ENCODE measurements at regions of chr5 and their contacts with region 1.

Region 1: GRCh38 chr5:149775785-149776184 is 45.7 kb downstream of the PPARGC1B start:
- DNase-seq: no peak
- CTCF ChIP-seq: peak; percentile 29

Region 2: GRCh38 chr5:149747141-149747832 is 28.5 kb before region 1 on chr5:
- CTCF ChIA-PET with region 1: interaction called, 22 read pairs
- POLR2A ChIA-PET with region 1: no interaction called
- DNase-seq: no peak
- CTCF ChIP-seq: no peak

Region 3: DNA sequence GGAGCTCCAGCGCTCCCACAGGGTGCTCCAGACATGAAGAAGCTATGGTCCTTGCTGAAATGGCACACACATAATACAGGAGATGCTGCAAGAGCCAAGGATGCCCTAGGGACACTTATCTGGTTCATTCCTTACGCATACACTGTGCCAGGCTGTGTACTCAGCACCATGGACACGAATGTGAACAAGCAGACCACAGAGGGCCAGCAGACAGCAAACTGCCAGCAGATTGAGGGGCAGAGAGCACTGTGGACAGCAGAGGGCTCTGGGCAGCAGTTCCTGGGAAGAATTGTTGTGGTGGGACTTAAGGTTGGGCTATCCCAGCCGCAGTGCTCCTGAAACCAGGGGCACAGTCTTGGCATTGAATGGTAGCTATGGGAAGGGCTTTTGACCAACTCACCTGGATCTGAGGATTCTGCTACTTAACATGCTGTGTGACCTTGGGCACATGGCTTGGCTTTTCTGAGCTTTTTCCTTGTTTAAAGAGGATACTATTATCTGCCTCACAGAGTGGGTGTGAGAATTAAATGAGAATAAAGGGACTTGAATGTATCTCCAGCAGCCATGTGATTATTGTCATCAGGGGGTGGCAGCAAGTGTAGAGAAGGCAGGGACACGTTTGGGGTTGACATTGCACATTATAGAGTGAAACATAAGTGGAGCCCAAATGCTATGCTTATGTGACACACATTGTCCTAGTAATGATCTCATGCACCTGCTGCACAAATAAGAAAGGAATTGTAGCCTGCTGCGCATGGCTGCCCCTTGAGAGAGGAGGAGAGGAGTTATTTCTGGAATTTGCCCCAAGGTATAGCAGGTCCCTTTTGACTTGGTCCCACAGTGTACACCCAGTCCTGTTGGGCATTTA is 15.6 kb before region 1 on chr5:
- CTCF ChIA-PET with region 1: interaction called, 23 read pairs
- POLR2A ChIA-PET with region 1: no interaction called
- DNase-seq: no peak
- CTCF ChIP-seq: no peak

Region 4: GRCh38 chr5:149799119-149799623 is 23.4 kb after region 1 on chr5:
- CTCF ChIA-PET with region 1: interaction called, 54 read pairs
- POLR2A ChIA-PET with region 1: no interaction called
- DNase-seq: no peak
- CTCF ChIP-seq: no peak

Region 5: GRCh38 chr5:149828161-149828884 is 52.5 kb after region 1 on chr5:
- CTCF ChIA-PET with region 1: interaction called, 55 read pairs
- POLR2A ChIA-PET with region 1: interaction called, 6 read pairs
- DNase-seq: peak; percentile 84
- CTCF ChIP-seq: peak; percentile 82